ENCODE measurements at regions of chr2 and their contacts with region 1.

Region 1: DNA sequence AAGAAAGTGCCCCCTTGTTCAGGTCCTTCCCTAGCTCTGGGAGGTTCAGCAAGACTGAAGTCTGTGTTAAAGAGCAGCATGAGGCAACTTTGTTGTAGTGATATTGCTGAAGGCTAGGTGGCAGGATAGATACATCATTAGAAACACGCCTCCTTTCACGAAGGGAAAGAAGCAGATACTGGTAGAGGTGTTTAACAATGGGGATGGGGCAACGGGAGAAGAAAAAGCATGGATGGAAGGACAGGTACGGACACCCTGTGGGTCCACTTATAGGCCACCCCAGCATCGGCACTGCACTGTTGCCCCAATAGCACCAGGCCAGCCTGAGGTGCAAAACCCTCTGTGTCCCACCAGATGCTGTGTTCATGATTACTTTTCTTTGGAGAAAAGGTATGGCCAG is 3.5 kb upstream of the IGFBP5 start:
- DNase-seq: peak in 1 of 4 donors; percentile 73
- ATAC-seq: peak; percentile 72
- H3K4me3 ChIP-seq: no peak overlapping the region
- H3K27ac ChIP-seq: no peak overlapping the region
- H3K4me1 ChIP-seq: peaks cover 10 to 15% of the 10 kb centered on the region in 2 donors
- H3K27me3 ChIP-seq: peaks cover 14 to 56% of the 10 kb centered on the region in 2 donors
- CTCF ChIP-seq: peak; percentile 36 to 38

Region 2: GRCh38 chr2:216905649-216906329 is 206.9 kb after region 1 on chr2:
- intact Hi-C with region 1: no loop called
- DNase-seq: no peak
- ATAC-seq: no peak
- H3K4me3 ChIP-seq: no peak overlapping the region
- H3K27ac ChIP-seq: no peak overlapping the region
- H3K4me1 ChIP-seq: no peaks in the 10 kb centered on the region
- H3K27me3 ChIP-seq: no peaks in the 10 kb centered on the region
- CTCF ChIP-seq: no peak

Region 3: GRCh38 chr2:217075268-217076057 is 376.6 kb after region 1 on chr2:
- intact Hi-C with region 1: no loop called
- DNase-seq: no peak
- ATAC-seq: peak; percentile 48
- H3K4me3 ChIP-seq: no peak overlapping the region
- H3K27ac ChIP-seq: no peak overlapping the region
- H3K4me1 ChIP-seq: peaks cover 0 to 4% of the 10 kb centered on the region in 2 donors
- H3K27me3 ChIP-seq: no peaks in the 10 kb centered on the region
- CTCF ChIP-seq: no peak

Region 4: DNA sequence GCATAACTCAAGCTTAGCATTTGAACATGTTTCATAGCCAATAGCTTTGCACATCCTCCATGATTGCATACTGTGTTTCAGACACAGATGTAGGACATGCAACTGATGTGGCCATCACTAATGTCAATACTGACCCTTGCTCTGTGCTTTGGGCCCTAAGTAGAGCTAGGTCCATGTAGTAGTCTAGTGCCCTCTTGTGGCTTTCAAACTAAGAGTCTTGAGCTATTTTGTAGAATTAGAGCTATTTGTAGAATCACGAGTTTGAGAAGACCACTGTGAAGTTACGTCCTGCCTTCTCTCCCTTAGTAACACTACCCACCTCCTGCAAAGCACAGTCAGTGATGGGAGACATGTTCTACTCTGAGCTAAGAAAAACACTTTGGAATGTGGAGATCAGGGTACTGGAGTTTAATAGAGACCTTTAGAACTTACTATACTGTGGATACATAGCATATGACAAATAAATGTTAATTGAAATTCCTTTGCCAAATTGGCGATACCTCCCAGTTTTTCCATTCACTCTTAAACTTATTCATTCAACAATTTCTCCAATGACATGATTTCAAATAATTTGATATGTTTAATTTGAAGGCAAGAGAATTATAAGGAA is 467.5 kb after region 1 on chr2:
- intact Hi-C with region 1: loop called in 1 of 2 experiments (anchors 10 kb)
- DNase-seq: no peak
- ATAC-seq: peak; percentile 62
- H3K4me3 ChIP-seq: no peak overlapping the region
- H3K27ac ChIP-seq: no peak overlapping the region
- H3K4me1 ChIP-seq: peaks cover 0 to 4% of the 10 kb centered on the region in 2 donors
- H3K27me3 ChIP-seq: peaks cover 3 to 25% of the 10 kb centered on the region in 2 donors
- CTCF ChIP-seq: peak; percentile 19 to 34

Region 5: DNA sequence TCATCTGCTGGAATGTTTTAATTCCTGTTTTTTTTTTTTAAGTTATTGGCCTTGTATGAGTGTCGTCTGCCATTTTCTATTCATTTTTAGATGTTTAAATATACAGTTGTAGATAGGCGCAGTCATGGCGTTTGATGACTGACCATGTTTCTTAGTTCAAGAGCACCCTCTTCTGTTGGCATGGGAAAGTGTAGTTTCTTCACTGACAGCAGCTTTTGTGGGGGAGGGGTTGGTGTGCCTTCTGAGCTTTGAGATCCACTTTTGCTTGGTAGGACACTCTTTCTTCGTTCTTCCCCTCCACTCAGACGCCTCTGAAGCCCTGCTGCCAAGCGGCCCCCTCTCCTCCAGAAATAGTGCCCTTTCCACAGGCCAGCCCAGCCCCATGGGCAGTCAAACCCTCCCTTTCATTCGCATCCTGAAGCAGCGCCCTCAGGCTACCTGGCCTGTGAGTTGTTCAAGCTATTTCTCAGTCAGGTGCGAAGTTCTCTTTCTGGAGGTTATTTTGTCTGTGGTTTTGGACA is 811.9 kb after region 1 on chr2:
- intact Hi-C with region 1: loop called in 1 of 2 experiments (anchors 5 kb)
- DNase-seq: peak in 3 of 4 donors; percentile 46 to 89 (median 77)
- ATAC-seq: peak; percentile 98
- H3K4me3 ChIP-seq: no peak overlapping the region
- H3K27ac ChIP-seq: no peak overlapping the region
- H3K4me1 ChIP-seq: peaks cover 0 to 5% of the 10 kb centered on the region in 2 donors
- H3K27me3 ChIP-seq: no peaks in the 10 kb centered on the region
- CTCF ChIP-seq: peak; percentile 49 to 56

Region 6: DNA sequence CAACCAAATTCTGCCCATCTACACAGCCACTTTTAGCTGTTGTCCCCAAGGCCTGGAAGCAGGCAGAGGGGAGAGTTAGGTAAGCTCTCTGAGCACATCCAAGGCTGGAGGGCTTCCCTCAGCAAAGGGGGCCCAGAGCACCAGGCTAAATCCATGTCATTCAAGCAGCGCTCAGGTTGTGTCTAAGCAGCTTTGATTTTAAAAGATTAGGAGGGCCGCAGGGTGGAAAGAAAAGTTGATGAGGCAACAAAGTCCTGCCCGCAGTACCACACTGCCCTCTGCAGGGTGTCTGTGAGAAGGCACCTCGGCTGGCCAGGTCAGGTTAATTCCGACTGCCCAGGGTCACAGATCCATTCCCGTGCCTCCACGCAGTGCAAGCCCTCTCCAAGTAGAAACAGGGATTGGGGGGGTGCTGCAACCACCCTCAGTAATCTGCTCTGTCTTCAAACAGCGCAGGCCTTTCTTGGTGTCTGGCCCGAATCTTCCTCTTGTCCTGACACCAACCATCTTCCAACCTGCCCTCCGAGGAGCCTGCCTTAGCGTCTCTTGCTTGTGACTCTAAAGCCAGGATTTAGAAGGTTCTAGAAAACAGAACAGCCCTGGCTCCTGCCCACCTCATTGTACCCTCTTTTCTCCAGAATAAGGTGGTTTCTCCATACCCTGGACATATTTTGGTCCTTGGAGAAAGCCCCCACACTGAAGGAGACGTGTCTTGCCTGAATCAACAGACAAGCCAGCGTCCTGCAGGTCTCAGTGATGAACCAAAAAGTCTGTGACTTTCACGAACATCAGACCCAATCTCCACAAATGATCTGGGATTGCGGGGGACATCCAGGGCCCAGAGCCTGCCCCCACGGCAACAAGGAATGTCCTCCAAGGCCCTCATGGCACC is 1014.7 kb after region 1 on chr2:
- intact Hi-C with region 1: loop called in 1 of 2 experiments (anchors 10 kb)
- DNase-seq: peak; percentile 64 to 84 (median 71)
- ATAC-seq: peak; percentile 97
- H3K4me3 ChIP-seq: no peak overlapping the region
- H3K27ac ChIP-seq: no peak overlapping the region
- H3K4me1 ChIP-seq: peaks cover 2 to 5% of the 10 kb centered on the region in 2 donors
- H3K27me3 ChIP-seq: no peaks in the 10 kb centered on the region
- CTCF ChIP-seq: peak; percentile 91 to 99

Measured in left lung (tissue), 14 donors.